Gastrocnemius medialis (tissue), 4 donors: ENCODE measurements at regions of chr2 and their contacts with region 1.

Region 1: GRCh38 chr2:222057347-222058073 is 241.3 kb downstream of the PAX3 start:
- DNase-seq: no peak
- ATAC-seq: no peak
- H3K4me3 ChIP-seq: no peak overlapping the region
- H3K27ac ChIP-seq: no peak overlapping the region
- H3K4me1 ChIP-seq: no peaks in the 10 kb centered on the region
- H3K27me3 ChIP-seq: peaks cover 0 to 11% (median 3%) of the 10 kb centered on the region in 3 donors
- CTCF ChIP-seq: peak; percentile 33 to 69 (median 44)
- POLR2A ChIP-seq: no peak

Region 2: GRCh38 chr2:222305516-222306392 is 248.2 kb after region 1 on chr2:
- in situ Hi-C with region 1: loop called in 2 of 4 experiments (anchors 10 to 25 kb)
- intact Hi-C with region 1: no loop called
- DNase-seq: no peak
- ATAC-seq: peak; percentile 74 to 76
- H3K4me3 ChIP-seq: peak overlapping the region; percentile 65 to 83 (median 70)
- H3K27ac ChIP-seq: peak overlapping the region; percentile 26 to 68 (median 53)
- H3K4me1 ChIP-seq: peaks cover 18 to 26% of the 10 kb centered on the region in 2 donors
- H3K27me3 ChIP-seq: peaks cover 94 to 98% (median 98%) of the 10 kb centered on the region in 3 donors
- CTCF ChIP-seq: no peak
- POLR2A ChIP-seq: no peak

Region 3: DNA sequence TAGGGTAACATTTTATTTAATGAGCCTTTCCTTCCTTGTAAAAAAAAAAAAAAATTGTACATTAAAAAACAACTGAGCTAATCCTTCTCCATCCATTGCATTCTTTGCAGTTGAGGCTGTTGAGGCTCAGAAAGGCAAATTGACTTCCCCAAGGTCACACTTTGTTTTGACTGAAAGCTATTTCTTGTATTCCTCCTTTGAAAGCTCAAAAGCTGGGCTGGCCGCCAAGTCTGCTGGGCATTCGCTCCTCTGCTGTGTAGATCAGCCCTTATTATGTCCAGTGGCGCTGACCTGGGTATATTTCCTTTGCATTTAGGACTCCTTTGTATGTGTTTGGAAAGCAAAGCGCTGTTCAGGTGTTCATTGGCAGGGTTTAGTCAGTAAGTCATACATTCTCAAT is 410.8 kb after region 1 on chr2:
- in situ Hi-C with region 1: no loop called
- intact Hi-C with region 1: no loop called
- DNase-seq: no peak
- ATAC-seq: no peak
- H3K4me3 ChIP-seq: no peak overlapping the region
- H3K27ac ChIP-seq: no peak overlapping the region
- H3K4me1 ChIP-seq: no peaks in the 10 kb centered on the region
- H3K27me3 ChIP-seq: no peaks in the 10 kb centered on the region
- CTCF ChIP-seq: no peak
- POLR2A ChIP-seq: no peak

Region 4: DNA sequence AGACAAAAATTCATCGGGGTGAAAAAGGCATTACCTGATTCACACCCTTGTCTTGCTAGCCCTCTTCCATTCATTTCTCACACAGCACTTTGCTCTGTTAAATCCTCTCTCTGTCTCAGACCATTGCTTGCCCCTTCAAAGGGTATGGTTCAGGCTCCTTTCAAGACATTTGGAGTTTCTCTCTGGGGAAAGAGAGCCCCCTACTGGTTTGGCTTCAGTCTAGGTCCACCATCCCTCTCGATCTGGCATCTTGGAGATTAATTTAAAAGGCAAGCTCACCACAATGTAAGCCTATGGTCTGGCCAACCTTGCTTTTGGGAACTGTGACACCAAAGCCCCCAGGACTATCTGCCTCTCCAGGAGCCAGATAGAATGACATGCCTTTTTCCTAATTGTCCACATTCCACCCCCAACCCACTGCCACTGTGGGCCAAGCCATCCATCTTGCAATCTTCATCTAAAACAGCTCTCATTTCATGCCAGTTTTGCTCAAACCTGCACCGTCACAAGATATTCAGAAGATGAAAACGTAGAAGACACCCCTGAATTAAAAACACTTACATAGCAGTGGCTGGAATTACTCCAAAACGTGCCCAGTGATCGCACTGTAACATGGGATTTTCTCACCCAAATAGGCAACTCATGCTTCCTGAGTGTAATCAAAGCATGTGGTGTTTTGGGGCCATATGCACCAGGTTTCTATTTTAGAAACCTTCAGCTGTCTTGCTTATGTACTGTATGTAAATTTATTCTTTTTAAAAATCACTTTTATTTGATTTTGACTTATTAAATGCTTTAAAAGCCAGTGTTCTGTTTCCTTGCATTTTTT is 504.5 kb after region 1 on chr2:
- in situ Hi-C with region 1: loop called in 2 of 4 experiments (anchors 25 kb)
- intact Hi-C with region 1: loop called (anchors 2 kb)
- DNase-seq: no peak
- ATAC-seq: peak in 1 of 2 donors; percentile 50
- H3K4me3 ChIP-seq: no peak overlapping the region
- H3K27ac ChIP-seq: no peak overlapping the region
- H3K4me1 ChIP-seq: no peaks in the 10 kb centered on the region
- H3K27me3 ChIP-seq: peaks cover 0 to 5% (median 0%) of the 10 kb centered on the region in 3 donors
- CTCF ChIP-seq: peak in 4 of 5 experiments; percentile 22 to 60 (median 45)
- POLR2A ChIP-seq: no peak

Region 5: DNA sequence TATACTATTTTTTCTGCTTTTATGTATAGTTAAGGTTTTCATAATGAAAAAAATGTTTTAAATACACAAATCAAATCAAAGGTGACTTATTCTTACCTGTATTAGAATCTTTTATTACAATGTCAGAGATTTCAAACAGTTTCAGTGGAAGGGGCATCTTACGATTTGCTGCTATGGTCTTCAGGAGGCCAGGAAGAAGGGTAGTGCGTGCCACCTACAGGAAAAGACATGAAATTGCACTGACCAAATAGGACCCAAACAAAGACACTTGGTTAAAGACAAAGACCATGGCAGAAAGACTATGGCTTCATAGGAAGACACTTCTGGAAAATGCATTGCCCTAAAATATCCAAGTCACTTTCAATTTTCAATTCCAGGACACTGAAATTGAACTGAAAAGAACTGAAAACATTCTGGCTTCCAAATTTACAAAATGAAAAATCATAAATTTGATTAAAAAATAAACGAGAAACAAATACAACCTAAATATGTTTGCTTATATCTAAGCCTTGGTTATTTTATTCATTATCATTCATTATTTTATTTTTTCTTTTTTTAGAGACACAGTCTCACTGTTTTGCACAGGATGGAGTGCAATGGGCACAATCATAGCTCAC is 556.3 kb after region 1 on chr2:
- in situ Hi-C with region 1: loop called in 3 of 4 experiments (anchors 10 to 25 kb)
- intact Hi-C with region 1: loop called (anchors 1 kb)
- DNase-seq: no peak
- ATAC-seq: peak; percentile 36 to 46
- H3K4me3 ChIP-seq: no peak overlapping the region
- H3K27ac ChIP-seq: no peak overlapping the region
- H3K4me1 ChIP-seq: no peaks in the 10 kb centered on the region
- H3K27me3 ChIP-seq: no peaks in the 10 kb centered on the region
- CTCF ChIP-seq: peak; percentile 33 to 68 (median 62)
- POLR2A ChIP-seq: no peak